HEK293T (cell line): ENCODE measurements at regions of chr6 and their contacts with region 1.

Region 1: GRCh38 chr6:56638760-56639159 is 3.9 kb downstream of the DST start:
- DNase-seq: no peak

Region 2: DNA sequence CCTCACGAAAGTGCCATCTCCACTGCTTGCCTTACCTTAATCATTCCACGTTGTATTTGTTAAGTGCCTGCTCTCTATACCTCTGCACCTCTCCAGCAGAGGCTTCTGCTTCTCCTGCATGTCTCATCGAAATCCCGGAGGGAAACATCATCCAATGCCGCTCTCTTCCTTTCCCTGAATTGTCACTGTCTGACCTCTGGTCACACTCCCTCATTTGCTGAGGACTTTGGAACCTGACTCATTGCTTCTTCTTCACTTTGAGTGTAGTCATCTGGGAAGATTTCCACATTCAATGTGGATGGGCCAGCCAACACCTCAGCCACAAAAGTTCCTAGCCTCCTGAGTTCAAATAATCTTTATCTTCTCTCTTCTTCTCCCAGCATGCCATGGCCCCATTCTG is 237.2 kb after region 1 on chr6:
- CTCF ChIA-PET with region 1: interaction called, 11 read pairs
- POLR2A ChIA-PET with region 1: no interaction called
- DNase-seq: no peak